Spleen (tissue), 13 donors: ENCODE measurements at regions of chr11 and their contacts with region 1.

Region 1: GRCh38 chr11:74170694-74171629 is at the starts of genes C2CD3 and PPME1:
- DNase-seq: peak; percentile 99
- H3K4me3 ChIP-seq: peak within 1 kb of the TSS; percentile 58 to 81 (median 72)
- H3K27ac ChIP-seq: peak within 1 kb of the TSS; percentile 73 to 93 (median 88)
- H3K4me1 ChIP-seq: peaks cover 28 to 67% (median 38%) of the 10 kb centered on the region in 6 donors
- H3K27me3 ChIP-seq: no peaks in the 10 kb centered on the region
- CTCF ChIP-seq: peak in 9 of 11 experiments; percentile 20 to 63 (median 42)
- POLR2A ChIP-seq: peak in 2 of 3 donors; percentile 40 to 45
- total RNA-seq, gene C2CD3: 26.6 to 49.2 (median 38.0) TPM
- total RNA-seq, gene PPME1: 13.1 to 32.0 (median 23.7) TPM

Region 2: GRCh38 chr11:73965076-73965860 is 205.7 kb before region 1 on chr11:
- intact Hi-C with region 1: loop called (anchors 10 kb)
- DNase-seq: no peak
- H3K4me3 ChIP-seq: no peak overlapping the region
- H3K27ac ChIP-seq: no peak overlapping the region
- H3K4me1 ChIP-seq: peaks cover 0 to 43% (median 19%) of the 10 kb centered on the region in 6 donors
- H3K27me3 ChIP-seq: no peaks in the 10 kb centered on the region
- CTCF ChIP-seq: no peak
- POLR2A ChIP-seq: no peak

Region 3: GRCh38 chr11:74018331-74019005 is 152.5 kb before region 1 on chr11:
- intact Hi-C with region 1: no loop called
- DNase-seq: no peak
- H3K4me3 ChIP-seq: no peak overlapping the region
- H3K27ac ChIP-seq: peak overlapping the region in 7 of 8 donors; percentile 42 to 83 (median 75)
- H3K4me1 ChIP-seq: peaks cover 13 to 85% (median 49%) of the 10 kb centered on the region in 6 donors
- H3K27me3 ChIP-seq: no peaks in the 10 kb centered on the region
- CTCF ChIP-seq: no peak
- POLR2A ChIP-seq: no peak